Vagina (tissue), 2 donors: ENCODE measurements at regions of chr5 and their contacts with region 1.

Region 1: DNA sequence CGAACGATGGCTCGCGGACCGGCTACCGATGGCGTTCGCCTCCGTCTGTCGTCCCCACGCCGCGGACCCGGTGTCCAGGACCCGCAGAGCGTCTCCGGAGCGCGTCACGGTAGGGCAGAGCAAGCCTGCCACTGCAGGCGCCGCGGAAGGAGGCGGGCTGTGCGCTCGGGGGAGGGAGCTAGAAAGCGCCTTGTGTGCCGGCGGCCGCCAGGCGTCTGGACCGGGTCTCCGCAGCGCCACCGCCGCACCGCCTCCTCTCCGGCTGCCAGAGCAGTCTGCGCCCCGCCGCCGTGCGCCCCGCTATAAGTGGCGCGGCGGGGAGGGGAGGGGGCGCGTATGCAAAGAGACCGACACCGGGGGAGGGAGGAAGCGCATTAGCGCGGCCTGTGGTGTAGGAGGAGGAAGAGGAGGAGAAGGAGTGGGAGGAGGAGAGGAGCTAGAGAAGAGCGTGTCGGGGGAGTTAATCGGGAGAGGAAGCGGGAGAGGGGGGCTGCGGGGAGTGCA is at the start of gene ENC1:
- DNase-seq: no peak
- H3K4me3 ChIP-seq: peak within 1 kb of the TSS; percentile 69 to 81
- H3K27ac ChIP-seq: peak within 1 kb of the TSS; percentile 80
- H3K4me1 ChIP-seq: peaks cover 38% of the 10 kb centered on the region
- H3K27me3 ChIP-seq: no peaks in the 10 kb centered on the region
- CTCF ChIP-seq: peak in 2 of 3 experiments; percentile 20 to 66
- POLR2A ChIP-seq: peak in 1 of 2 donors; percentile 9
- total RNA-seq, gene ENC1: 7.1 TPM

Region 2: GRCh38 chr5:74034733-74035132 is 605.8 kb before region 1 on chr5:
- intact Hi-C with region 1: loop called (anchors 5 kb)
- DNase-seq: no peak
- H3K4me3 ChIP-seq: no peak overlapping the region
- H3K27ac ChIP-seq: no peak overlapping the region
- H3K4me1 ChIP-seq: no peaks in the 10 kb centered on the region
- H3K27me3 ChIP-seq: no peaks in the 10 kb centered on the region
- CTCF ChIP-seq: no peak
- POLR2A ChIP-seq: no peak